AG04450 (cell line): ENCODE measurements at regions of chr7 and their contacts with region 1.

Region 1: DNA sequence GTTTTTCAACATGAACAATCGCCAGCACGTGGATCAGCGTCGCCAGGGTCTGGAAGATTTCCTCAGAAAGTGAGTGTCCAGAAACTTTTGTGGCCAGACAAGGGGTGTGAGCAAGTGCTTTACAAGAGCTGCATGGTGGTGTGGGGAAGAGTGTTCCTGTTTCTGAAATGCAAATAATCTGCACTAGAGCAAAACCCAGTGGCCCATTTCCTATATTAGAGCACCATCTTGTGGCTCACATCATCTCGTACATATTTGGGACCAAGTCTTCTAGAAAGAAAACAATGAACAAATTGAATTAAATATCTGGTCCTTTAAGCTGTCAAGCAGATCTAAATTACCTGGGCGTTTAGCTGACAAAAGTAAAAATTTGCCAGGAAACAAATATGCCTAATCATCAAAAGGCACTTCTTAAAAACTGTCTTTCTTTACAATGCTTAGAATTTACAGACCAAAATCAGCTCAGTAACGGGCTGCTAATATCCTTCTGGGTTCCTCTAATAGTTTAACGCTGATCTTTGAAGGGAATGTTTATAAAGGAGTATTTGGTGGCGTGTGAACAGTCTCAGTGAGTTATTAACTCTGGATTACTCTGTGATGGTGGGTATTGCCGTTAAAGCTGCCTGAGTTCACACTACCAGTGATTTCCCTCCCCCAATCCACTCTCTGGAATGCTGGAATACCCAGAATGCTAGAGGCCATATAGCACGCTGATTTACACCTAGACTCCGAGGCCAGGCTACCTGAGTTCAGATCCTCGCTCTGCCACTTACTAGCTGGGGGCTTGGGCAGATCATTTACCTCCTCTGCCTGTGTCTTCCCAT is 73.6 kb downstream of the SNX10 start:
- DNase-seq: peak; percentile 57
- H3K4me3 ChIP-seq: no peak overlapping the region
- H3K27ac ChIP-seq: no peak overlapping the region
- H3K27me3 ChIP-seq: peaks cover 24% of the 10 kb centered on the region
- CTCF ChIP-seq: peak; percentile 74

Region 2: GRCh38 chr7:25389489-25390106 is 975.7 kb before region 1 on chr7:
- CTCF ChIA-PET with region 1: interaction called, 10 read pairs
- POLR2A ChIA-PET with region 1: no interaction called
- DNase-seq: no peak
- H3K4me3 ChIP-seq: no peak overlapping the region
- H3K27ac ChIP-seq: no peak overlapping the region
- H3K27me3 ChIP-seq: peaks cover 12% of the 10 kb centered on the region
- CTCF ChIP-seq: peak; percentile 60

Region 3: GRCh38 chr7:26078437-26079336 is 286.6 kb before region 1 on chr7:
- CTCF ChIA-PET with region 1: interaction called, 19 read pairs
- POLR2A ChIA-PET with region 1: no interaction called
- DNase-seq: no peak
- H3K4me3 ChIP-seq: no peak overlapping the region
- H3K27ac ChIP-seq: no peak overlapping the region
- H3K27me3 ChIP-seq: peaks cover 25% of the 10 kb centered on the region
- CTCF ChIP-seq: peak; percentile 41

Region 4: DNA sequence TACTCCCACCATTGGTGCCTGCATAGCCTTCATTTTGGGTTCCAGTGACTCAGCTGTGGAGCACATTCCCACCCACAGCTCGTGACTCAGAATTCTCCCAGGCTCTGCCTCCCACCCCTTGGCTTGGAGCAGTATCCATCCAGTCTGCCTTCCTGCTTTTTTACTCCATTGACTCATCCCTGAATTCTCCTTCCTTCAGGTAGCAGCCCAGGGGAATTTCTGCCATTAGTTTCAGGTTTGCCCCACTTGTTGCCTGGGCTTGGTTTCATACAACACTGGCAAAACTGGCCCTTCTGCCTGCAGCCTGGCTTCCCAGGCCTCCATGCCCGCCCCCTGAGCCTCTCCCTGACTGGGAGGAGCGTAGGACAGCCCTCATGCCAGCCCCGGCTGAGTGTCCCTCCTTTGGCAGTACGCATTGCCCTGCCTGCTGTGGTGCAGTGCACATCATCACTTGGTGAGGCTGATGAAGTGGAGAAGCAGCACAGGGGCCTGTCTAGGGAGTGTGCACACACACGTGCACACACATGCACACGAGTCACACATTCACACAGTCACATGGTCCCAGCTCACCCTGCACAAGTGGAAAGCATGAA is 18.6 kb before region 1 on chr7:
- CTCF ChIA-PET with region 1: interaction called, 12 read pairs
- POLR2A ChIA-PET with region 1: no interaction called
- DNase-seq: no peak
- H3K4me3 ChIP-seq: no peak overlapping the region
- H3K27ac ChIP-seq: no peak overlapping the region
- H3K27me3 ChIP-seq: no peaks in the 10 kb centered on the region
- CTCF ChIP-seq: no peak

Region 5: DNA sequence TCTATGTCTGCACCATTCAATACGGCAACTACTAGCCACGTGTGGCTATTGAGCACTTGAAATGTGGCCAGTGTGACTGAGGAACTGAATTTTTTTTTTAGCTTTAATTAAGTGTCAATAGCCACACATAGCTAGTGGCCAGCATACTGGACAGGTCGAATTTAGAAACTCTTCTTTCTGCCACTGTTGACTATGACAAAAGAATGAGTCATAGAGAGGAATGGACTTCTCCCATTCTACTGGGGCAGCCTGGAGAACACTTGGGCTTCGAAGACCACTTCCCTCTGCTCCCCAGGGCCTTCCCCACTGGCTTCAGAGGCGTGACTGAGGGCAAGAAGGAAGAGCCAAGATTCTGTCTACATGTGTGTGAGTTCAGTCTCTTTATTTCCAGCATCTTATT is 63.9 kb after region 1 on chr7:
- CTCF ChIA-PET with region 1: no interaction called
- POLR2A ChIA-PET with region 1: no interaction called
- DNase-seq: no peak
- H3K4me3 ChIP-seq: no peak overlapping the region
- H3K27ac ChIP-seq: no peak overlapping the region
- H3K27me3 ChIP-seq: no peaks in the 10 kb centered on the region
- CTCF ChIP-seq: no peak

Region 6: DNA sequence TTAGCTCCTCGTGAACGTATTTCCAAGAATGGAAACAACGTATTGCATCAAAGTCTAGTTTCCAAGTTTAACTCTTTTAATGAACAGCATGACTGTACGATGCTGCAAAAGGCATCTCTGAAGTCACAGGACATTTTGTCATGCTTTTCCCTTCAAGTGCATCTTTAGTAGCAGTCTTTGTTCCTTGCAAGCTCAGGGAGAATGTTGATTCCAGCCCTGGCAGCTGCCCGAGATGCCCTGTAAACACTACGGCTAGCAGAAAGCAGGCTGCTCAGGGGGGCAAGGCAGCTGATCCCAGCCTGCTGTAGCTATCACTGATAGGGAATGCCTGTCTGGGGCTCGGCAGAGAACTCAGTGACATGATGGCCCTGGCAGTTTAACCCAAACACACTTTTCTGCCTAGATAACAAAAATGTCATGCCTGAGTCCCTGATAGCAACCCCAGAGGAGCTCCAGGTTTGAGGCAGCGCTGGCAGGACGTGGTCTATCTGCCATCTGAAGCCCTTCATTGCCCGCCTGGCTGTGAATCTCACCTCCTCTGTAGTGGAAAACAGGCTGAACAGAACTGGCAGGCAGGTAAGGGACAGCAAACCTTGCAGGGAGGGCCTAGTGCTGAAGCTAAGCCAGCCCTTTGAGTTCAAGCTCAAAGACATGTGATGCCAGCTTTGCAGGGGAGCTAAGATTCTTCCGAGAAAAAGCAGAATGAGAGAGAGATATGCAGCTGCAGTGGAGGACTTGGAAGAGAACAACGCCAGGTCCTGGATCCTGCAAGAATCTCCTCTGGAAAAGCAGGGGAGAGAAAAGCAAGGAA is 191.0 kb after region 1 on chr7:
- CTCF ChIA-PET with region 1: no interaction called
- POLR2A ChIA-PET with region 1: no interaction called
- DNase-seq: no peak
- H3K4me3 ChIP-seq: no peak overlapping the region
- H3K27ac ChIP-seq: no peak overlapping the region
- H3K27me3 ChIP-seq: peaks cover 3% of the 10 kb centered on the region
- CTCF ChIP-seq: no peak

Region 7: GRCh38 chr7:26657686-26658396 is 292.6 kb after region 1 on chr7:
- CTCF ChIA-PET with region 1: interaction called, 32 read pairs
- POLR2A ChIA-PET with region 1: no interaction called
- DNase-seq: no peak
- H3K4me3 ChIP-seq: no peak overlapping the region
- H3K27ac ChIP-seq: no peak overlapping the region
- H3K27me3 ChIP-seq: peaks cover 3% of the 10 kb centered on the region
- CTCF ChIP-seq: no peak

Region 8: GRCh38 chr7:27143023-27143949 is 778.0 kb after region 1 on chr7 and contains the start of gene HOXA5:
- CTCF ChIA-PET with region 1: interaction called, 57 read pairs
- POLR2A ChIA-PET with region 1: interaction called, 4 read pairs
- DNase-seq: peak; percentile 100
- H3K4me3 ChIP-seq: peak within 1 kb of the TSS; percentile 94
- H3K27ac ChIP-seq: peak within 1 kb of the TSS; percentile 93
- H3K27me3 ChIP-seq: no peaks in the 10 kb centered on the region
- CTCF ChIP-seq: peak; percentile 84; the same call in 1 of the 2 replicates
- polyA plus RNA-seq, gene HOXA5: 48.3 and 51.0 TPM in 2 replicates